ENCODE measurements at regions of chr5 and their contacts with region 1.

Region 1: GRCh38 chr5:53814819-53815218 is 254.4 kb downstream of the NDUFS4 start:
- DNase-seq: no peak
- H3K4me3 ChIP-seq: no peak overlapping the region
- H3K27ac ChIP-seq: no peak overlapping the region
- H3K4me1 ChIP-seq: no peaks in the 10 kb centered on the region
- H3K27me3 ChIP-seq: no peaks in the 10 kb centered on the region
- CTCF ChIP-seq: no peak
- POLR2A ChIP-seq: no peak

Region 2: DNA sequence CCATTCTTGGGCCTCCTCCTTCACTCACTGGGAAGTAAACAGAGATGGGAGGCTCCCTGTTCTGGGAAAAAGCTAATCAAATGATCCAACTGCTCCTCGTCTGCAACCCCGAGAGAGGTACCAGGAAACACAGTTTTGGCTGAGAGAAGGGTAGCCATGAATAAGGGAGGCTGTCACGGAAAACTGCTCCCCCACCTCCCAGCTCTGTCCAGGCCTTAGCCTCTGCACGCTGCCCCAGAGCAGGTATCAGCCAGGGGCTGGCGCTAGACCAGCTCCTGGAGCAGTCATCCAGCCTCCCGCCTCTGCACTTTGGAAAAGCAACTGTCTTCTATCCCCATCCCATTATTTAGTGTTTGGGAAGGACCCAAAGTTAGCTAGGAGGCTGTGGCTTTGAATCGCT is 11.7 kb after region 1 on chr5:
- intact Hi-C with region 1: loop called (anchors 1 kb)
- DNase-seq: peak in 1 of 2 donors; percentile 23
- H3K4me3 ChIP-seq: no peak overlapping the region
- H3K27ac ChIP-seq: no peak overlapping the region
- H3K4me1 ChIP-seq: no peaks in the 10 kb centered on the region
- H3K27me3 ChIP-seq: no peaks in the 10 kb centered on the region
- CTCF ChIP-seq: no peak
- POLR2A ChIP-seq: no peak

Region 3: DNA sequence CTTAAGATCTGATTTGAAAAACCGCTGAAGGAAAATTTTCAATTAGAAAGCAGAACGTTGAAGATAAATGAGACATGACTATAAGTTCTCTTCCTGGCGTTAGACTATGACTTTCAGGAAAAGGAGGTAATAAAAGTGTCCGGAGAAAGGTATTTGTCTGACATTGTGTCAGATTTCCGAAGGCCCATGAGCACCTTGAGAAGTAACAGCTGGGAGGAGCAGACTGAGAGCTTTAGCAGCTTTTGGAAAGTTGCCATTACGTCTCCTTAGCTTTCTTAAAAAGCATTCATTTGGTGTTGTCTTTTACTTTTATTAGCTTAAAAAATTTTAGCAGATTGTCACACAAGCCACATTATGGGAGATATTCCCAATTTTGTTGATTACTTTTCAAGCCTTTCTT is 109.1 kb after region 1 on chr5:
- intact Hi-C with region 1: no loop called
- DNase-seq: peak in 1 of 2 donors; percentile 29
- H3K4me3 ChIP-seq: no peak overlapping the region
- H3K27ac ChIP-seq: peak overlapping the region in 1 of 2 donors; percentile 27
- H3K4me1 ChIP-seq: peaks cover 0 to 3% of the 10 kb centered on the region in 2 donors
- H3K27me3 ChIP-seq: no peaks in the 10 kb centered on the region
- CTCF ChIP-seq: no peak
- POLR2A ChIP-seq: no peak